A549 (cell line): ENCODE measurements at regions of chr17 and their contacts with region 1.

Region 1: DNA sequence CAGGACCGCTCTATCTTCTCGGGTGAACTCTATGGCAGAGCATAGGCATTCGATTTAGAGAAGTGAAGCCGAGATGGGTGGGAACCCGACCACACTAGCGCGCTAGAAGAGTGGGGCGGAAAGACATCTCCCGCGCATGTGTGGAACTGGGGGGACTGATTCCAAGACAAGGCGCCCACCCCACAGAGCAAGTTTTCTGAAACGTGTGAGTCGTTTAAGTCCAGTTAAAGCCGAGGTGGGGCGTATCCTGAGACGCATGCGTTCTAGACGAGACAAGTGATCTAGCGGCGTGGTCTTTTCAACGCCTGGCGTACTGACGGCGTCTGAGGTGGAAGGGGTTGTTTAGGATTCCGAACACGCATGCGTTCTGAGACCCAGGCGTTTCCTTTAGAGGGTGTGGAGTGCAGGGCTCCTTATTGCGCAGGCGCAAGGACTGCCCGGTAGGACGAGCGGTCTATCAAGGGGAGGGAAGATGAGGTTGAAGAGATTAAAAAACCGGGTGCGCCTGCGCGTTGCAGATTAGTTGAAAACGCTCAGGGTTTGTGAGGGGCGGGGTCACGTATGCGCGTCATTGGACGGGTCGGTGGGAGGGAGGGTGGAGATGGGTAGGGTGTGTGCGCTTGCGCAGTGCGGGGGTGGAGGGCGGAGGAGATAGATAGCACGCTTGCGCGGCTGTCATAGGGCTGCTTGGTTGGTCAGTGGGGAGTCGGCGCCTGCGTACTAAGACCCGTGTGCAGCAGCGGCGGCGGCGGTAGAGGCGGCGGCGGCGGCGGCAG is at the start of gene EIF5A:
- DNase-seq: peak; percentile 100
- ATAC-seq: peak; percentile 86
- H3K4me3 ChIP-seq: peak within 1 kb of the TSS; percentile 98
- H3K27ac ChIP-seq: peak within 1 kb of the TSS; percentile 98 to 100
- H3K4me1 ChIP-seq: peaks cover 29% of the 10 kb centered on the region
- CTCF ChIP-seq: no peak
- EP300 ChIP-seq: no peak
- POLR2A ChIP-seq: peak; percentile 71
- RAD21 ChIP-seq: no peak
- polyA plus RNA-seq, gene EIF5A: 945 and 969 TPM in 2 replicates

Region 2: DNA sequence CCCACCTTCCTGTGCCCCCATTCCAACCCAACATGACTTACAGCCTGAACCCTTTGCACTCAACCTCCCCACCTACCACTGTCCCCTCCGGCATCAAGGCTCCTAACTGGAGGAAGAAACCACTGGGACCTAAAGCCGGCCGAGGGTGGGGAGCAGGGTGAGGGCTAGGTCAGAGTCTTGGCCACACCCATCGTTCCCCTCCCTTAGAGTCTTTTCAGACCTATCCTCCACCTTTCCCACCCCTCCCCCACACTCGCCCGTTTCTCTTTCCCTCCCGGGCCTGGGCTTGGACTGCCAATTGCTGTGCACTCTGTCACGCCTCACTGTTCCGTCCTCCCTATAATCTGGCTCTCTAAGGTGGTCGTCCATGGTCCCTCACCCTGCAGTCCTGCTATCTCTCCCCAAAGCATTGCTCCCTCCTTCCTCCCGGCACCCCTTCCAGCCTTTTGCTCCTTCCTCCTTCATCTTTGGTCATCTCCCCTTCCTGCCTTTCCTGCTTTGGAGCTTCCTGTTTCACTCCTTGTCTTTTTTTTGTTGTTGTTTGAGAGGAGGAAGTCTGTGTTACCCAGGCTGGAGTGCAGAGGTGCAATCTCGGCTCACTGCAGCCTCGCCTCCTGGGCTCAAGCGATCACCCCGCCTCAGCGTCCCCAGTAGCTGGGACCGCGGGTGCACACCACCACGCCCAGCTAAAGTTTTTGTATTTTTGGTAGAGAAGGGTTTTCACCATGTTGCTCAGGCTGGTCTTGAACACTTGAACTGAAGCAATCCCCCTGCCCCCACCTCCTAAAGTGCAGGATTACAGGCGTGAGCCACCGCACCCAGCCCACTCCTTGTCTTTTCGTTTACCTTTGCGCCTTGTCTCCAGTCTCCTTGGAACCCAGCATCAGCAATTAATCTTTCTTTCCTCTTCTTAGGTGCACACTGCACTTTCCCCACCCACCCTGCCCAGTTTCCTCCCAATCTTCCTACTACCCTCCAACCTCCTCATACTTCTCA is 43.7 kb before region 1 on chr17:
- CTCF ChIA-PET with region 1: interaction called, 10 read pairs
- POLR2A ChIA-PET with region 1: no interaction called
- DNase-seq: peak in 1 of 2 experiments; percentile 46
- ATAC-seq: peak; percentile 20 to 22; a peak in 4 of 6 replicates
- H3K4me3 ChIP-seq: no peak overlapping the region
- H3K27ac ChIP-seq: peak overlapping the region; percentile 73 to 83
- H3K4me1 ChIP-seq: peaks cover 64% of the 10 kb centered on the region
- CTCF ChIP-seq: no peak
- EP300 ChIP-seq: no peak
- POLR2A ChIP-seq: no peak
- RAD21 ChIP-seq: no peak

Region 3: GRCh38 chr17:7323731-7324437 is 16.8 kb after region 1 on chr17:
- CTCF ChIA-PET with region 1: interaction called, 18 read pairs
- POLR2A ChIA-PET with region 1: interaction called, 3 read pairs
- DNase-seq: peak; percentile 53 to 83
- ATAC-seq: peak; percentile 40 to 82; a peak in 5 of 6 replicates
- H3K4me3 ChIP-seq: no peak overlapping the region
- H3K27ac ChIP-seq: no peak overlapping the region
- H3K4me1 ChIP-seq: peaks cover 10% of the 10 kb centered on the region; the same call in 2 of the 3 replicates
- CTCF ChIP-seq: peak; percentile 78
- EP300 ChIP-seq: no peak
- POLR2A ChIP-seq: no peak
- RAD21 ChIP-seq: peak; percentile 44 to 58; a peak in 3 of 5 replicates

Region 4: DNA sequence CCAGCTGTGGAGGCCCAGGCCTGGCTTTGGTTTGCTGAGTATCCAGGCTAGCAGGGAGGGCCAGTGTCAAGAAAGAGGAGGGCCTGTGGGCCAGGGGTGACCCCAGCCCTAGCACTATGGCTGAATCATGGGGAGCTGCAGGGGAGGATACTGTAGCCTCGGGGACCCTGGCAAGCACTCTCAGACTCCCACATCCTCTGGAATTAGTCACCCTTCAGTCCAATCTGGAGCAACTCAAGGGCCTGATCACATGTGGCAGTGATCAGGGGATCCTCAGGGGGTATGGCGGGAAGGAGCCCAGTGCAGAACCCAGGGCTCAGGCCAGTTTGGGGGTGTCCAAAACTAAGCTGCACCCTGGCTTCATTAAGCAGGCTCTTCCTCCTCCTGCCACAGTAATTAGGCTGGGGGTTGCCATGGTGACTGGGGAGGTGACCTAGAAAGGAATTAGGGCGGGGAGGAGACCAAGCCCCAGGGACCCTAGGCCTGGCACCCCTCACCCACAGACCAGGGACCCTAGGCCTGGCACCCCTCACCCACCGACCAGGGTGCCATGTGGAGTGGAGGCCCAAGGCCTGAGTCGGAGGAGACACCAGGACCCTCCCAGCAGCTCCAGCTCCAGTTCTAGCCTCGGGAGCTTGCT is 106.4 kb after region 1 on chr17:
- CTCF ChIA-PET with region 1: no interaction called
- POLR2A ChIA-PET with region 1: no interaction called
- DNase-seq: no peak
- ATAC-seq: no peak
- H3K4me3 ChIP-seq: no peak overlapping the region
- H3K27ac ChIP-seq: no peak overlapping the region
- H3K4me1 ChIP-seq: 0 out of 3 replicates have a peak, but pooled peaks cover 3% of the 10 kb centered on the region
- CTCF ChIP-seq: no peak
- EP300 ChIP-seq: no peak
- POLR2A ChIP-seq: no peak
- RAD21 ChIP-seq: no peak